Natural killer cell (primary cell): ENCODE measurements at regions of chr9 and their contacts with region 1.

Region 1: GRCh38 chr9:35657546-35658136 is at the start of gene RMRP:
- DNase-seq: peak; percentile 74 to 96
- ATAC-seq: peak; percentile 80 to 90 (median 83)
- H3K4me3 ChIP-seq: peak within 1 kb of the TSS; percentile 82
- H3K4me3 Mint-ChIP-seq: peak within 1 kb of the TSS; percentile 97
- H3K27ac ChIP-seq: peak within 1 kb of the TSS; percentile 99
- H3K27ac Mint-ChIP-seq: peak within 1 kb of the TSS; percentile 95 to 100
- H3K4me1 ChIP-seq: peaks cover 64% of the 10 kb centered on the region
- H3K4me1 Mint-ChIP-seq: peaks cover 55 to 67% of the 10 kb centered on the region in 2 donors
- H3K27me3 ChIP-seq: no peaks in the 10 kb centered on the region
- H3K27me3 Mint-ChIP-seq: peaks cover 3 to 8% of the 10 kb centered on the region in 2 donors
- CTCF ChIP-seq: no peak
- total RNA-seq, gene RMRP: 5,042 to 6,602 (median 5,874) TPM

Region 2: DNA sequence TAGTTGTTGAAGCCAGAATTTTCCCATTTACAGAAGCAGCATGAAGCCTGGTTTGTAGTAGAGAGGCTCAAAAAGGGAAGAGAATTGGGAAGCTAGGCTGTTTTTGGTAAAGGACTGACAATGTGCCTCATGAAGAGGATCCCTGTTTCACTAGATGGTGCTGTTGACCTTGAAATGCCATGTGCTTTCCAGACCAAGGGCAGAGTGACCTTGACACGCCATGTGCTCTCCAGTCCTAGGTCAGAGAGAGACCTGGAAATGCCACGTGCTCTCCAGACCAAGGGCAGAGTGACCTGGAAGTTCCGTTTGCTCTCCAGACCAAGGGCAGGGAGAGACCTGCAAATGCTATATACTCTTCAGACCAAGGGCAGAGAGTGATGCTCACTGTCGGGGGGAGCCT is 463.9 kb before region 1 on chr9:
- intact Hi-C with region 1: no loop called
- DNase-seq: no peak
- ATAC-seq: no peak
- H3K4me3 ChIP-seq: no peak overlapping the region
- H3K4me3 Mint-ChIP-seq: no peak overlapping the region
- H3K27ac ChIP-seq: no peak overlapping the region
- H3K27ac Mint-ChIP-seq: no peak overlapping the region
- H3K4me1 ChIP-seq: no peaks in the 10 kb centered on the region
- H3K4me1 Mint-ChIP-seq: no peaks in the 10 kb centered on the region
- H3K27me3 ChIP-seq: no peaks in the 10 kb centered on the region
- H3K27me3 Mint-ChIP-seq: peaks cover 3 to 6% of the 10 kb centered on the region in 2 donors
- CTCF ChIP-seq: no peak

Region 3: DNA sequence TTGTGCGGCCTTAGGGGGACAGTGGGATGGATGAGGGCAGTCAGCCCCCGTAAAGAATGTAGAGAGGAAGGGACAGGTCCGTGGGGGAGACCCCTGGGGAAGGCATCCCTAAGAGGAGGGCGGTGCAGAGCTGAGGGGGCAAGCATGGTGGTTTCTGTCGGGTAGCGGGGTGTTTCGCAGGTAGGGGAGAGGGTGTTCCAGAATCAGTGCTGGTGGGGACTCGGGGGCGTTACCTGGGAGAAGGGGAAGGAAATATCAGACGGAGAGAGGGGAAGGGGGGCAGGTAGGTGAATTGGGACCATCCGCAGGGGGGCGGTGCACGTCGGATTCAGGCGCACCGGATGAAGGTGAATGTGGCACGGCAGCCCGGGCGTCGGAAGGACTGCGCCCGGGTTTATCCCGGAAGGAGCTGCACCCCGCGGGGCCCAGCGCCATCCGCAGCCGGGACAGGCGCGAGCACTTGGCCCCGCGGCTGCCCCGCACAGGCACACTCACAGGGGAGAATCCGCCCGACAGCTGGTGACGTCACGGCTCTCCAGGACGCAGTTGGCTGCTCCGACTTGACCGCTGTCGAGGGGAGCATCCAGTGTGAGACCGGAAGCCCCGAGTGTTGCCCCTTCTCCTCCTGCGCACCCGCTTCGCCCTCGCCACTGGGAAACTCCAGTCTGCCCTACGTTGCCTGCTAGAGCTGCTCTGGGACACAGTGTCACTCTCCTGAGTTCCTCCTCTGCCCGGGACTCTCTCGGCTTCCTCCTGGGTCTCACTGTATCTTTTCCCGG is 40.8 kb before region 1 on chr9:
- intact Hi-C with region 1: loop called (anchors 2 kb)
- DNase-seq: peak; percentile 85 to 86
- ATAC-seq: peak; percentile 73 to 82 (median 80)
- H3K4me3 ChIP-seq: peak overlapping the region; percentile 55
- H3K4me3 Mint-ChIP-seq: peak overlapping the region; percentile 96
- H3K27ac ChIP-seq: peak overlapping the region; percentile 97
- H3K27ac Mint-ChIP-seq: peak overlapping the region; percentile 98 to 99
- H3K4me1 ChIP-seq: peaks cover 52% of the 10 kb centered on the region
- H3K4me1 Mint-ChIP-seq: peaks cover 59 to 65% of the 10 kb centered on the region in 2 donors
- H3K27me3 ChIP-seq: no peaks in the 10 kb centered on the region
- H3K27me3 Mint-ChIP-seq: no peaks in the 10 kb centered on the region
- CTCF ChIP-seq: no peak

Region 4: DNA sequence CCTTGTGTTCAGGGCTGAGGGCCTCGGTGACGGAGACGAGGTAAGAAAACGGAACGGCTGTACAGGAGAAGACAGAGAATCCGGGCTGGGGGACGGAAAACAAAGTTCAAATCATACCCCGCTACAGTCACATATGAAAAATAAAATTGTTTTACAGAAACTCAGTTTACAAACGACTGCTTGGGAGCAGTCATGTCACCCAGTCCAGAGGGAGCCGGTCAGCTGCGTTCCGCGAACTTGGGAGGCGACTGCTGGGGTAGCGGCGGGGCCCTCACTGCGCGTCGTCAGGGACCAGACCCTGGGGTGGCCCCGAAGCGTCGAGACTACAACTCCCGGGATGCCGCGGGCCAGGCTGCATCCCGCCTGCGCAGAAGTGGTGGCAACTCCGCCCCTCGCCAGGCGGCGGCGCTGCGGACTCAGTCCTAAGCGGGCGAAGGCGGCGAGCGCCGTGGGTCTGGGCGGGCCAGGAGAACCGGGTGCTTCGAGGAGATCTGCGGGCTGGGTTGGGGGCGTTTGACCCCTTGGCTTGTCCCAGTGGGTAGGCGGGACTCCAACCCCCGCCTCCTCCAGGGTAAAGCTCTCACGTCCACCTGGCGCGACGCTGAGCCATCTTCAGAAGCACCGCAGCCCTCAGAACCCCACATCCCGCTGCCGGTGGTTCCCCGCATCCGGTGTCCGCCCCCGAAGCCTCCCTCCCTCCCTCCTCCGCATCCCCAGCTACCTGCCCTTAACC is 10.9 kb before region 1 on chr9:
- intact Hi-C with region 1: loop called (anchors 1 kb)
- DNase-seq: peak; percentile 94 to 95
- ATAC-seq: peak; percentile 97 to 99 (median 97)
- H3K4me3 ChIP-seq: peak overlapping the region; percentile 55
- H3K4me3 Mint-ChIP-seq: peak overlapping the region; percentile 99
- H3K27ac ChIP-seq: peak overlapping the region; percentile 82
- H3K27ac Mint-ChIP-seq: peak overlapping the region; percentile 98
- H3K4me1 ChIP-seq: peaks cover 79% of the 10 kb centered on the region
- H3K4me1 Mint-ChIP-seq: peaks cover 42 to 58% of the 10 kb centered on the region in 2 donors
- H3K27me3 ChIP-seq: no peaks in the 10 kb centered on the region
- H3K27me3 Mint-ChIP-seq: no peaks in the 10 kb centered on the region
- CTCF ChIP-seq: peak; percentile 94

Region 5: DNA sequence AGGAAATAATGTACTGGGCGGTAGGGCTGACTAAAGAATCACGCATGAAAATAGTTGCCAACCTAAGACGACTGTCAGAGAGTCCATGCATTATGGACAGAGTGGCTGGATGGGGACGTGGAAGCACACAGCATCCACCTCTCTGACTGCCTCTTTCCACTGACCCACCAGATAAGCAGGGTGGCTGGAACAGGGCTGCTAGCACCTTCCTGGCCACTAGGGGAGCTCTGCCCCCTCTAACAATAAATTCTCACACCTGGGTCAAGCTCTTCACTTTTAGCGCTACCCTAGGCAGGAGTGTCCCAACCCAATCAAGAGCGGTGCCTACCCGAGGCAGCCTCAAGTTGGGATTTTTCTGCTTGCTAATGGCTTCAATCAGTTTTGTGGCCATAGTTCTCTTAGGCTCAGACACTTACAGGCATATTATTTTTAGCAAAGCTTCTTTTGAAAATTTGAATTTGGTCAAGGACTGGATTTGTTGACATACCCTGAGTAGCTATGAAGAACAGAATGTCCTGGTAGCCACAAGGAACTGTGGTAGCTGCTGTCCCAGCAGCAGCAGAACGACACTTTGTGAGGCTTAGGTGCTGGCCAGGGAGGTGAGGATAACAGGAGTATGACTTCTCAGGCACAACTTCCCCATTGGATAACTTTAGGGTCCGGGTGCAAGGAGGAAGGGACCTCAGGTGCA is 39.0 kb after region 1 on chr9:
- intact Hi-C with region 1: loop called (anchors 1 kb)
- DNase-seq: peak; percentile 46 to 79
- ATAC-seq: peak; percentile 93 to 100 (median 97)
- H3K4me3 ChIP-seq: no peak overlapping the region
- H3K4me3 Mint-ChIP-seq: no peak overlapping the region
- H3K27ac ChIP-seq: peak overlapping the region; percentile 23
- H3K27ac Mint-ChIP-seq: peak overlapping the region; percentile 23 to 67
- H3K4me1 ChIP-seq: peaks cover 8% of the 10 kb centered on the region
- H3K4me1 Mint-ChIP-seq: peaks cover 10 to 18% of the 10 kb centered on the region in 2 donors
- H3K27me3 ChIP-seq: no peaks in the 10 kb centered on the region
- H3K27me3 Mint-ChIP-seq: no peaks in the 10 kb centered on the region
- CTCF ChIP-seq: peak; percentile 88

Region 6: DNA sequence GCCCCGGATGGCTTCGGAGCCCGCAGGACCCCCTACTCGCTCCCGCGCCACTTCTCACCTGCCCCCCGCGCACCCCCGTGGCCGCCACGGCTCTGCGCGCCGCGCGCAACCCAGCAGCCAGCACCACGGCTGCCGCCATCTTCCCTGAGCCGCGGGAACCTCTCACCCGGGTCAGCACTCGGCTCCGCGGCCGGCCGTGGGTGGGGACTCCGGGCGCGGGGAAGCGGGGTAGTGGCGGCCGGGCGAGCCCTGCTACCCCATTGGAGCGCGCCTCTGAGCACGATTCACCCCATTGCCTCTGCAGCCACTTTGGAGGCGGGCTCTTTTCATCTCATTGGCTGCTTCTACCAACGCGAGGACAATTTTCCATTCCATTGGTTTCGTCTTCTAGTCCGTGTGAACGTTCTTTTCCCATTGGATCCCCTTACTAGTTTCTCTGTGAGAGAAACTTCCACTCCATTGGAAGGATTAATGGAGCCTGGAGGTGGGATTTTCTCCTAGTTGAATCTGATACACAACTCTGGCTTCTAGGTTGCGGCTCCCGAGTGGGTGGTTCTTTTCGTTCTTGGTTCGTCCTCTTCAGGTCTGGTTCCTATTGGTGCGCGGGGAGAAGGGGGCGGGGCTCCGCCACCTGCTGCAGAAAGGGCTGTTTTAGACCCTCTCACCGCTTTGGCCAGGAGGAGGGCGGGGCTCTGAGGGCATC is 157.4 kb after region 1 on chr9 and contains the start of gene HINT2:
- intact Hi-C with region 1: loop called (anchors 1 kb)
- DNase-seq: peak; percentile 96 to 98
- ATAC-seq: peak; percentile 78 to 91 (median 79)
- H3K4me3 ChIP-seq: peak within 1 kb of the TSS; percentile 73
- H3K4me3 Mint-ChIP-seq: peak within 1 kb of the TSS; percentile 98
- H3K27ac ChIP-seq: peak within 1 kb of the TSS; percentile 87
- H3K27ac Mint-ChIP-seq: peak within 1 kb of the TSS; percentile 96 to 98
- H3K4me1 ChIP-seq: peaks cover 38% of the 10 kb centered on the region
- H3K4me1 Mint-ChIP-seq: peaks cover 43 to 53% of the 10 kb centered on the region in 2 donors
- H3K27me3 ChIP-seq: no peaks in the 10 kb centered on the region
- H3K27me3 Mint-ChIP-seq: no peaks in the 10 kb centered on the region
- CTCF ChIP-seq: no peak
- total RNA-seq, gene HINT2: 25.8 to 27.5 (median 25.9) TPM